Endothelial cell of umbilical vein (primary cell): ENCODE measurements at regions of chr2 and their contacts with region 1.

Region 1: DNA sequence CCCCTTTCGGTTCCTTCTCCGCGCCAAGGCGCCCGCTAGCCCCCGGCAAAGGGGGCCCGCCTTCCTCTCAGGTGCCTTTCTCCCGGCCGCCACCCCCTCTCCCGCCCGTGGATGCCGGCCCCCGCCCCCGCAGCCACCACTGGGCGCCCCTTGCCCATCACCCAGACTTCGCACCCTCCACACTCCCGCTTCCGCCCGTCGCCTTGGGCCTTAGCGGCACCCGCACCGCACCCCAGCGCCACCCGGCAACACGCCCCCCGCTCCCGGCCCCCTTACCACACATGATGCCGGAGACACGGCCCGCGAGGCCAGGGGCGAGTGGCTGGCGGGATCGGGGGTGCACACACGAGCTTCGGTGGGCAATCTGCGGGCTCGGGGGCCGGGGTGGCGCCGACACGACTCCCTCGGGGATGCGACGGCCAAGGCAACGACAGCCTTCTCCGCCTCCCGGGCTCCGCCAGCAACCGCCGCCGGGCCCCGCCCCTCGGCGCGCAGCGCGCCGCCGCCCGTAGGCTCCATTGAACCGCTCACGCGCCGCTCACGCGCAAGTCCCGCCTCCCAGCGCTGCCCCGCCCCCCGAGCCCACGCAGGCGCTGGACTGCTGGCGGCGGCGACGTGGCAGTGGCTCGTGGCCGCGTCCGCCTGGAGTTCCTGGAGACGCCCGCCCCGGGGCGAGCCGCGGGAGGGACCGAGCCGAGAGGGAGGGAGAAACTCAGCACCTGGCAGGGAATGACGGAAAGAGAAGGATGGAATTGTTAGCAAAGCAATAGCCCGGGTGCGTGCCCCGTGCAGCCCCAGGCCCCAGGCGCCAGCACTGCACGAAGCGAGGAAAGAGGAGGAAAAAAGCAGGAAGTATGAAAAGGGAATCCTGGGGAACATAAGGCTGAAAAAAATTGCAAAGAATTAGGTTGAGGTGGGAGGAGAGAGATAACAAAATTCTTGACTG is at the start of gene GFPT1:
- DNase-seq: peak; percentile 97
- H3K4me3 ChIP-seq: peak within 1 kb of the TSS; percentile 86 to 99 (median 94)
- H3K27ac ChIP-seq: peak within 1 kb of the TSS; percentile 44
- H3K4me1 ChIP-seq: peaks cover 15% of the 10 kb centered on the region
- H3K27me3 ChIP-seq: no peaks in the 10 kb centered on the region
- CTCF ChIP-seq: no peak
- POLR2A ChIP-seq: peak; percentile 52
- total RNA-seq, gene GFPT1: 38.7 and 45.1 TPM in 2 replicates

Region 2: DNA sequence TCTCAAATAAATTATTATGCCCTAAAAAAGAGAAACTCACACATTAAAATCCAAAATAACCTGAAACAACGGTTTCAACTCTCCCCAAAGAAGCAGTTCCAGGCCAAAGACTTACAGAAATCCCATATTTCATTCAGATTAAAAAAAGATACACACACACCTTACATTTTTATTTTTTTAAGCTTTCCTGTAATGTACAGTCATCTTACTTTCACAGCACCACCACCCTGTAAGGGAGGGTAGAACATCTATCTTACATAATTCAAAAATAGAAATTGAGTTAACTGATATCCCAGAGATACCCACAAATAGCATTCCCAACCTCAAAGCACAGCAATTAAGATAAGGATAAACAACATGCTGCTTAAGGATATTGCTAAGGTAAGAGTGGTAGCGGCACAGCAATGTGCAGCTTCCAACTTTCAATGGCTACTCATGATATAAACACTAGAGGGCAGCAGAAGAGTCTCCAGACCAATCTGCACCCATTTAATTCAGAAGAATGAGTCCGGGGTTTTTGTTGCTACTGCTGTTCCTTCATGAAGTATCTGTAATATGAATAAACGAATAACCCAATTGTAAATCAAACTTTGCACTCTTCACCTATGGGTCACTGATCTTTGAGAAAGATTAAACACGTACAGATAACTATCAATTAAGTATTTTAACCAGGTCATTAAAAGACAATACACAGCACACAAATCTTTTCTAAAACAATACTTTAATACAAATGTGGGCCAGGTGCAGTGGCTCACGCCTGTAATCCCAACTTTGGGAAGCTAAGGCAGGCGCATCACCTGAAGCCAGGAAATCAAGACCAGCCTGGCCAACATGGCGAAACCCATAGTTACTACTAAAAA is 11.3 kb before region 1 on chr2:
- CTCF ChIA-PET with region 1: interaction called, 31 read pairs
- POLR2A ChIA-PET with region 1: no interaction called
- dilution Hi-C with region 1: no loop called
- intact Hi-C with region 1: no loop called
- DNase-seq: peak; percentile 40
- H3K4me3 ChIP-seq: no peak overlapping the region
- H3K27ac ChIP-seq: no peak overlapping the region
- H3K4me1 ChIP-seq: no peaks in the 10 kb centered on the region
- H3K27me3 ChIP-seq: no peaks in the 10 kb centered on the region
- CTCF ChIP-seq: peak; percentile 39 to 47
- POLR2A ChIP-seq: no peak

Region 3: GRCh38 chr2:69436938-69437750 is 50.1 kb after region 1 on chr2 and contains the start of gene NFU1:
- CTCF ChIA-PET with region 1: interaction called, 4 read pairs
- POLR2A ChIA-PET with region 1: no interaction called
- dilution Hi-C with region 1: no loop called
- intact Hi-C with region 1: loop called (anchors 2 kb)
- DNase-seq: peak; percentile 98
- H3K4me3 ChIP-seq: peak within 1 kb of the TSS; percentile 74 to 92 (median 78)
- H3K27ac ChIP-seq: peak within 1 kb of the TSS; percentile 87
- H3K4me1 ChIP-seq: peaks cover 9% of the 10 kb centered on the region
- H3K27me3 ChIP-seq: no peaks in the 10 kb centered on the region
- CTCF ChIP-seq: peak; percentile 62 to 86
- POLR2A ChIP-seq: peak; percentile 98
- total RNA-seq, gene NFU1: 47.9 and 49.7 TPM in 2 replicates

Region 4: DNA sequence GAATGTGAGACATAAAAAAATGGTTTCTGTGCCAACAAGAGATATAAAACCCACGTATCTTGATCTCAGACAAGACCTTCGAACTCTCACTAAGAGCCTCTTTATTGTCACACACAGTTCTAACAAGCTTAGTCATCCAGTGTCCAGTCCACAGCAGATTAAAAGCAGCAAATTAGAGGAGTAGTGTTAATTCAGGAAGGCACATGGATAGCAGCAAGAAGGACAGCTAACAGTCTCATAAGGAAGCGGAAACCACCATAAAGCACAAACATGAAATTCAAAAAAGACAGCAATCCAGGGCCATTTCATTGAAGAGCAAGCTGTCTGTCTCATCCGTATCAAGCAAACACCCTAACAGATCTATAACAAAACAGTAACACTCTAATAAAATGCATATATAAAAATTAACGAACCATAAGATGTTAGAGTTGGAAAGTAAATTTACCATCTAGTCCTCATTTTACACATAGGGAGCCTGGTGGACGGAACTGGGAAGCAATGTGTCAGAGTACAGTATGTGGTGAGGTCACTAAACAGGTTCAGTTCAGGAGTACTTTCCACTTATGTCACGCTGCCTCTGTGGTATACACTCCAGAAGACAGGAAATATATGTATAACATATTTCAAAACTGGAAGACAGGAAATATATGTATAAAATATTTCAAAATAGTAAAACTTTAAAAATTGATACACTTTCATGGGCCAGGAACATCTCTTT is 238.2 kb after region 1 on chr2:
- CTCF ChIA-PET with region 1: no interaction called
- POLR2A ChIA-PET with region 1: no interaction called
- dilution Hi-C with region 1: no loop called
- intact Hi-C with region 1: no loop called
- DNase-seq: peak; percentile 23
- H3K4me3 ChIP-seq: no peak overlapping the region
- H3K27ac ChIP-seq: no peak overlapping the region
- H3K4me1 ChIP-seq: peaks cover 9% of the 10 kb centered on the region
- H3K27me3 ChIP-seq: no peaks in the 10 kb centered on the region
- CTCF ChIP-seq: no peak
- POLR2A ChIP-seq: no peak